Right lobe of liver (tissue), 6 donors: ENCODE measurements at regions of chr22 and their contacts with region 1.

Region 1: DNA sequence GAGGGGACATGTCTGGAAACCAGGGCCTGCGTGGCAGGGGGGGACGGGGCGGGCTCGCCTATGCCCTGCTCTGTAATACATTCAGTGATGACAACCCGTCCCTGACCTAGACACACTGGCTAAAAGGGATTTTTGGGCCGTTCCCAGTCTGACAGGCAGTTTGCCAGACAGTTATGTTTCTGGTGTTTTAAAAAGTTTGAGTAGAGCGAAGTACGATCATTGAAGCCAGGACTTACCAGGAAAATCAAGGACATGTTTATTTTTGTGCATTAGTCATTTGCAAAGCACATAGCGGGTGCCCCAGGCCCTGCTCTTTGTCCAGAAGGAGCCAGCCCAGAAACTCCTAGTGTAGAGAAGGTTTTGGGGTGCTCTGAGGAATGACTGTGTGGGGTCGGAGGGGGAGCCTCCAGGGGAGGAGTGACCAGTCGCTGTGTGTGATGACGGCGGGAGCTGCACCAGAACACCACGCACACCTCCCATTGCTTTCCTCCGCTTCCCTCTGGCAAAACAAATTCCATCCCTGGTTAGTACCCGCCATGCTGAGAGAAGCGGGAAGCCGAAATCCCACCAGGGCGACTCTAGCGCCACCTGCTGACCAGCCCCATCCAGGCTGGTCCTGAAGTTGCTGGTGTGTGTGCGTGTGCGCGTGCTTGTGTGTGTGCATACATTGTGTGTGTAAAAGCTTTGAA is 50.8 kb downstream of the FBLN1 start:
- DNase-seq: peak in 2 of 3 donors; percentile 69 to 73
- ATAC-seq: peak; percentile 76 to 90 (median 80)
- H3K4me3 ChIP-seq: no peak overlapping the region
- H3K27ac ChIP-seq: no peak overlapping the region
- H3K4me1 ChIP-seq: no peaks in the 10 kb centered on the region
- H3K27me3 ChIP-seq: no peaks in the 10 kb centered on the region
- CTCF ChIP-seq: peak; percentile 77 to 93 (median 78)
- POLR2A ChIP-seq: no peak

Region 2: DNA sequence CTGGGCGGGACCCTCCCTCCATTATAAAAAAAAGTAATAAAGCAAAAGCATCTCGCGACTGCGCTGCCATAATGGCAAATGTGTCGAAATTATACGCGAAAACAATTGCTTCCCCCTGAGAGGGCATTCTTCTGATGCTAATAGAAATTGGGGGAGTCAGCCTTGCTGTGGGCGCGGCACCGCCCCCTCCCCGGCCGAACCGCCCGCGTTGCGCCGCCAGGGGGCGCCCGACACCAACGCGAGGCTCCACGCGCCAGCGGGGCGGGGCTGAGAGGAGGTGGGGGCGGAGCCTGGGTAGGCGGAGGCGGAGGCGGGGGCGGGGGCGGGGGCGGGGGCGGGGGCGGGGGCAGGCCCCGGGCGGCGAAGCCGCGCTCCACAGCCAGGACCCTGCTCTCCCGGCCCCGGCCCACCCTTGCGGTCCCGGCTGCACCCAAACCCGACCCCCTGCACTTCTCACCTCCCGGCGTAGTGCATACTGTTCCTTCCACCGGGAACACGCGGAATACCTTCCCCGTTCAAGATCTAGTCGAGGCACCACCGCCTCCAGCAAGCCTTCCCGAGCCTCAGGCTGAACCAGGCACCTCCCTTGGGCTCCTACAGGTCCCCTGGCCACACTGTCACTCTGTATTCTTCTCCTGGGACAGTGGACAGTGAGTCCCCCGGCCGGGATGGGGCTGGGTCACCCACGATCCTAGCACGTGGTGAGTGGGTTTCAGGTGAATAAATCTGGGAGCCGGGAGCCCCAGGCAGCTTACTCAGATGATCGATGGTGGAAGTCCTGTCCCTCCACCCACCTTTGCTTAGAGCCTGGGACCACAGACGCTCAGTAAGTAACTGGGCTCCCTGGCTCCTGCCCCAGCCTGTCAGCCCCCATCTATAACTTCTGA is 284.3 kb before region 1 on chr22:
- intact Hi-C with region 1: loop called (anchors 10 kb)
- DNase-seq: peak; percentile 89 to 92 (median 89)
- ATAC-seq: peak; percentile 89 to 98 (median 92)
- H3K4me3 ChIP-seq: peak overlapping the region; percentile 51 to 56 (median 55)
- H3K27ac ChIP-seq: no peak overlapping the region
- H3K4me1 ChIP-seq: peaks cover 0 to 2% (median 0%) of the 10 kb centered on the region in 4 donors
- H3K27me3 ChIP-seq: no peaks in the 10 kb centered on the region
- CTCF ChIP-seq: peak; percentile 82 to 96 (median 94)
- POLR2A ChIP-seq: no peak

Region 3: GRCh38 chr22:45441138-45441537 is 112.4 kb before region 1 on chr22:
- intact Hi-C with region 1: loop called (anchors 5 kb)
- DNase-seq: peak in 2 of 3 donors; percentile 50 to 59
- ATAC-seq: peak; percentile 89 to 93 (median 90)
- H3K4me3 ChIP-seq: no peak overlapping the region
- H3K27ac ChIP-seq: no peak overlapping the region
- H3K4me1 ChIP-seq: no peaks in the 10 kb centered on the region
- H3K27me3 ChIP-seq: no peaks in the 10 kb centered on the region
- CTCF ChIP-seq: peak; percentile 49 to 79 (median 62)
- POLR2A ChIP-seq: no peak

Region 4: GRCh38 chr22:45448431-45448830 is 105.1 kb before region 1 on chr22:
- intact Hi-C with region 1: loop called (anchors 5 kb)
- DNase-seq: no peak
- ATAC-seq: no peak
- H3K4me3 ChIP-seq: no peak overlapping the region
- H3K27ac ChIP-seq: no peak overlapping the region
- H3K4me1 ChIP-seq: no peaks in the 10 kb centered on the region
- H3K27me3 ChIP-seq: no peaks in the 10 kb centered on the region
- CTCF ChIP-seq: no peak
- POLR2A ChIP-seq: no peak

Region 5: DNA sequence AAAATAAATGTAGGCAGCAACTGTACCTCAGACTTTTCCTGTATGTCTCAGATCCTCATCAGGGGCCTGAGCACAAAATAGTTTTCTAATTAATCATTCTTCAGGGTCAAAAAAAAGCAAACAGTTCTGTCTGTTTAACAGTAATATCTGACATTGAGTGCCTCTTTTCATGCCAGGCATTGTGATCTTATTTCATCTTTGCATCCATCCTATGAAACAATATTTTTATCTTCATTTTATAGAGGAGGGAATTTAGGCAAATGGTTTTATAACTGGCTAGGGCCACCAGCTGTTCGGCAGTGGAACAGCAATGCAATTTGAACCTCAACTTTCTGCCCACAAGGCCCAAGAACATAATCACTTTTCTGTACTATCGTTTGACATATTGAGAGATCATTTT is 277.9 kb after region 1 on chr22:
- intact Hi-C with region 1: no loop called
- DNase-seq: no peak
- ATAC-seq: peak; percentile 30 to 40 (median 34)
- H3K4me3 ChIP-seq: no peak overlapping the region
- H3K27ac ChIP-seq: no peak overlapping the region
- H3K4me1 ChIP-seq: no peaks in the 10 kb centered on the region
- H3K27me3 ChIP-seq: no peaks in the 10 kb centered on the region
- CTCF ChIP-seq: peak; percentile 37 to 58 (median 44)
- POLR2A ChIP-seq: no peak